Activated T-helper 1 cell treated with anti-CD3 and anti-CD28 coated beads, Interleukin-12 subunit alpha, Interleukin-12 subunit beta, Interleukin-2, Interleukin-4 antibody, amounts not matched to agents 30 ng/mL and 10 ng/mL and 1 ng/mL, durations not matched to agents 14 hours and 24 hours and 36 hours (primary cell): ENCODE measurements at regions of chr3 and their contacts with region 1.

Region 1: DNA sequence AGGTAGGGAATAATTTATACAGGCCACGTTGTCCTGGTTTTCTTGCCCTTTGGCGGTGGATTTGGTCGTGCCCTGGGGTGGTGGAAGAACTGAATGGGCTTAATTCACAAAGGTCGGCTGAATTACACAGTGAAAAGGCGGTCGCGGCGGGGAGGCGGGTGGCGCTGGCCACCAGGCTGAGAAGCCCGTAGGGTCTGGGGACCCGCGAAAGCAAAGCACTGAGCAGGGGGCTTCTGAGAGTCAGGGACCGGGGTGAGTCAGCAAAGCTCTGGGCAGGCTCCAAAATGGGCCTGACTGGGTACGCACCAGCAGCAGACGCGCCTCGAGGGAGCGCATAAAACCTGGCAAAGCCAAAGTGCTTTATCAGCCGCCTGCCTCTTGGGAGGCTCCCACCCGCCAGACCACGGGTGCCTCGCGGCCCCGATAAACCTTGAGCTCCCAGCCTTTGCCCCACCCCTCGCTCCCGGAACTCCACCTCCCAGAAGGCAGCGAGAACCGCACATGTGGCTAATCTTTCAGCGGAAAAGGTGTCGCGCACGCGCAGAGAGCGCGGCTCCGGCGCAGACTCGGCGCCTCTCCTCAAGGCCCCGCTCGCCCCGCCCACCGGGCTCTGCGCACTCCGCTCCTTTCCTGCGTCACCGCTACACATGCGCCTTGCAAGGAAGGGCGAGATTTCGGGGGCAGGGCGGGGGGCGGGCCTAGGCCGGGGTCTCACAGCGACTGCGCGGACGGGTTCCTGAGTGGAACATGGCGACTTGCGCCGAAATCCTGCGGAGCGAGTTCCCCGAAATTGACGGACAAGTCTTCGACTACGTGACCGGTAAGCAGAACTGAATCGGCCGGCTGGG is at the start of gene ABCF3:
- DNase-seq: peak; percentile 99
- H3K4me3 Mint-ChIP-seq: peak within 1 kb of the TSS; percentile 98
- H3K27ac Mint-ChIP-seq: peak within 1 kb of the TSS; percentile 89
- H3K4me1 Mint-ChIP-seq: peaks cover 25% of the 10 kb centered on the region
- H3K27me3 Mint-ChIP-seq: no peaks in the 10 kb centered on the region
- total RNA-seq, gene ABCF3: 75.2 and 76.4 TPM in 2 replicates

Region 2: DNA sequence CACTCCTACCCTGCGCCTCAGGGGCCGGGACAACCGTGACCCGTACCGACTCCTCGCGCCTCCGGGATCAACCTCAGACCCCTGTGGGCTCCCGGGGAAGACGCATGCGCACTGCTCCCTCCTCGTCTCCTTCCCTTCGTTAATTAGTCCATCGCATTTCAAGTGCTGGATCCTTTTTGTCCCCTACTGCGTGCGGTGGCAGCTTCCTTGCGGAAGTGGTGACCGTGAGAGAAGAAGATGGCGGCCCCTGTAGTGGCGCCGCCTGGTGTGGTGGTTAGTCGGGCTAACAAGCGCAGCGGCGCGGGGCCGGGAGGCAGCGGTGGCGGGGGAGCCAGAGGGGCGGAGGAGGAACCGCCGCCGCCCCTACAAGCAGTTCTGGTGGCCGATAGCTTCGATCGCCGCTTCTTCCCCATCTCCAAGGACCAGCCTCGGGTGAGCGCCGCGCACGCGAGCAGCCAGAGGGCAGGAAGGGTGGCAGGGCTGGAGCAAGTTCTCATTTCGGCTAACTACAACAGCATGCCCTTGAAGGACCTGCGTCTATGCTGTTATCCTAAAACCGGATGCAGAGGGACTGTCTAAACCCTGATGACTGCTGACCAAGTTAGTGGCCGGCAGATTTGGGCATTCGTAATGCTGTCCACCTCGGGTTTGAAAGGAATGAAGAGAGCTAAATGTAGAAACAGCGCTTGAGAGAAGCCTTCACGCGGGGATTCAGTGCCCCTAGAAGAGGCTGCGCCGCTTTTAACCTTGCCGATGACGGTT is 50.4 kb before region 1 on chr3 and contains the start of gene EIF2B5:
- intact Hi-C with region 1: loop called (anchors 1 kb)
- DNase-seq: peak; percentile 83
- H3K4me3 Mint-ChIP-seq: peak within 1 kb of the TSS; percentile 92
- H3K27ac Mint-ChIP-seq: peak within 1 kb of the TSS; percentile 85
- H3K4me1 Mint-ChIP-seq: peaks cover 31% of the 10 kb centered on the region
- H3K27me3 Mint-ChIP-seq: no peaks in the 10 kb centered on the region
- total RNA-seq, gene EIF2B5: 75.6 and 75.9 TPM in 2 replicates

Region 3: GRCh38 chr3:184154885-184155643 is 30.6 kb before region 1 on chr3 and contains the start of gene DVL3:
- intact Hi-C with region 1: loop called (anchors 1 kb)
- DNase-seq: peak; percentile 51
- H3K4me3 Mint-ChIP-seq: peak within 1 kb of the TSS; percentile 95
- H3K27ac Mint-ChIP-seq: peak within 1 kb of the TSS; percentile 88
- H3K4me1 Mint-ChIP-seq: peaks cover 20% of the 10 kb centered on the region
- H3K27me3 Mint-ChIP-seq: peaks cover 5% of the 10 kb centered on the region
- total RNA-seq, gene DVL3: 59.4 and 61.5 TPM in 2 replicates

Region 4: DNA sequence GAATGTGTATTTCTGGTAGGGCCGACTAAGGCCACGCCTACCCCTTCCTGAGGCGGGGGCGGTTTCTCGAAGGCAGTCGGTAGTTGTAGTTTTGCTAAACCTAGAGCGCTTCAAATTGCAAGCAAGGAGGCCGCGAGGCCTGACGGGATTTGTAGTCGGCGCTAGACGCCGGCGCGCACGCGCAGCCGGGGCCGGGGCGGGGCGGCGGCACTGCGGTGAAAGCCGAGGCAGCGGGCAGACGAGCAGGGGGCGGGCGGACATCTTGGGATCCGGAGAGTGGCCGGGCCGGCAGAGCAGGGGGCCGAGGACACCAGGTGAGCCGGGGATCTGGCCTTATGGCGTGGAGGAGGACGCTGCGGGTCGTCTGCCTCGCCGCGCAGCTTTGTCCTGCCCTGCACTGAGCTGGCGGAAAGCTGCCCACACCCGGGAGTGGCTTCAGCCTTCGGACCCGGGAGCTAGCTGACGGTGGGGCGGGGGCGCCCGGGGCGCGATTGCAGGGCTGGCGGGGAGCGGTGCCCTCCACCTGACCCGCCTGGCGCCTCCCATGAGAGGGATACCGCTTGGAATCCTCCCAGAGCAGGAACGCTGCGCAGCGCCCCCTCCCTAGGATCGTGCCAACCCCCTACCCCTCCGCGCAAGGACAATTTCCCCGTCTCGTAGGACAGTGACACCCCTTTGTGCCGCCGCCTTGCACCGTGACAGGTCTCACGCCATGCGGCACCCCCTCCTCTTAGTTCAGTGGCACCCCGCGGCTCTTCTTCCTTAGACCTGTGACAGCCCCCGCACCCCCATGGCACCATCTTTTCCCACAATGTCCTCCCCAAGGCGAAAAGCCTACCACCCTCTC is 10.8 kb before region 1 on chr3 and contains the start of gene AP2M1:
- intact Hi-C with region 1: loop called (anchors 1 kb)
- DNase-seq: peak; percentile 99
- H3K4me3 Mint-ChIP-seq: peak within 1 kb of the TSS; percentile 95
- H3K27ac Mint-ChIP-seq: peak within 1 kb of the TSS; percentile 85
- H3K4me1 Mint-ChIP-seq: peaks cover 28% of the 10 kb centered on the region
- H3K27me3 Mint-ChIP-seq: no peaks in the 10 kb centered on the region
- total RNA-seq, gene AP2M1: 235 and 238 TPM in 2 replicates

Region 5: DNA sequence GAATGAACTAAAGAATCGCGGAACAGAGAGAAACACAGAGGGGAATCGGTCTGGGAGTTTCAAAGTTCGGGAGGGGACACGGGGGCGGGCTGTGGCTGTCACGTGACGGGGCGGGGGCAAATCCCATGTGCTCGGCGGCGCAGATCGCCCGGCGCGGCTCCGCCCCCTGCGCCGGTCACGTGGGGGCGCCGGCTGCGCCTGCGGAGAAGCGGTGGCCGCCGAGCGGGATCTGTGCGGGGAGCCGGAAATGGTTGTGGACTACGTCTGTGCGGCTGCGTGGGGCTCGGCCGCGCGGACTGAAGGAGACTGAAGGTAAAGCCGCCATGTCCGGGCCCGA is 128.6 kb after region 1 on chr3 and contains the start of gene EIF4G1:
- intact Hi-C with region 1: loop called (anchors 1 kb)
- DNase-seq: peak; percentile 92
- H3K4me3 Mint-ChIP-seq: peak within 1 kb of the TSS; percentile 88
- H3K27ac Mint-ChIP-seq: peak within 1 kb of the TSS; percentile 93
- H3K4me1 Mint-ChIP-seq: peaks cover 29% of the 10 kb centered on the region
- H3K27me3 Mint-ChIP-seq: no peaks in the 10 kb centered on the region
- total RNA-seq, gene EIF4G1: 657 and 706 TPM in 2 replicates

Region 6: GRCh38 chr3:185585859-185586685 is 1400.4 kb after region 1 on chr3 and contains the start of gene SENP2:
- intact Hi-C with region 1: loop called (anchors 2 kb)
- DNase-seq: peak; percentile 99
- H3K4me3 Mint-ChIP-seq: peak within 1 kb of the TSS; percentile 86
- H3K27ac Mint-ChIP-seq: peak within 1 kb of the TSS; percentile 86
- H3K4me1 Mint-ChIP-seq: peaks cover 20% of the 10 kb centered on the region
- H3K27me3 Mint-ChIP-seq: no peaks in the 10 kb centered on the region
- total RNA-seq, gene SENP2: 33.5 and 34.6 TPM in 2 replicates